Caco-2 (cell line): ENCODE measurements at regions of chr9 and their contacts with region 1.

Region 1: GRCh38 chr9:115591584-115591984 is 473.6 kb upstream of the TNC start:
- DNase-seq: peak; percentile 71 to 72
- H3K4me3 ChIP-seq: no peak overlapping the region
- H3K4me3 Mint-ChIP-seq: peak overlapping the region; percentile 31
- H3K27ac Mint-ChIP-seq: peak overlapping the region; percentile 60
- H3K4me1 ChIP-seq: 0 out of 2 replicates have a peak, but pooled peaks cover 3% of the 10 kb centered on the region
- H3K4me1 Mint-ChIP-seq: peaks cover 8% of the 10 kb centered on the region
- H3K27me3 ChIP-seq: no peaks in the 10 kb centered on the region; the same call in 1 of the 2 replicates
- H3K27me3 Mint-ChIP-seq: peaks cover 2% of the 10 kb centered on the region
- CTCF ChIP-seq: peak; percentile 71 to 86

Region 2: DNA sequence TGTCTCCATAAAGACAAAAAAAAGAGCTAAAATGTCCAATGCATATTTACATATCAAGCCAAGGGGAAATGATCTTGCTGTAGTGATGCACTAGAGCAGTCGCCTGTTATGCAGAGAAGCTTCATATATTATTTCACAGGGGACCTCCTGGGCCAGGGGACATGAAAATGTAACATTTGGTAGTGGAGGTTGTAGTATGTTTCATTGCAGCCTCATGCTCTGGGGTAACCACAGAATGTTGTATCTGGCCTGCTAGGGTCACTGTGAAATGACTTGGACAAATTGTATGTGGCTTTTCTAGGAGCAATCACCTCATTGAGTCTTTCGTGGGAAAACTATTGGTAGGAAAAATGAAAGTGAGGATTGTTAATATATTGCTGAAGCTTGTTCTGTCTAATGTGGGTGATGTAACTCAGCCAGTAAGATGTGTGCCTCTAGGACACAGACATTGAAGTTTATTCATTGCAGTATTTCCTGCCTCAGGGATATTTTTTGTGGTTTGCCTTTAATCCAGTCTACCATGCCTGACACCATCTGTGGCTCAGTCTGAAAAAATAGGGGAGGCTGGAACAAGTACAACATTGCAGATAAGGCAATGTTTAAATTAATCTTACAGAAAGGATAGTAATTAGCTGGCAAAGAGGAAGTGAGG is 42.8 kb before region 1 on chr9:
- CTCF ChIA-PET with region 1: no interaction called
- POLR2A ChIA-PET with region 1: no interaction called
- intact Hi-C with region 1: no loop called
- DNase-seq: no peak
- H3K4me3 ChIP-seq: no peak overlapping the region
- H3K4me3 Mint-ChIP-seq: no peak overlapping the region
- H3K27ac Mint-ChIP-seq: no peak overlapping the region
- H3K4me1 ChIP-seq: no peaks in the 10 kb centered on the region
- H3K4me1 Mint-ChIP-seq: no peaks in the 10 kb centered on the region
- H3K27me3 ChIP-seq: no peaks in the 10 kb centered on the region
- H3K27me3 Mint-ChIP-seq: peaks cover 7% of the 10 kb centered on the region
- CTCF ChIP-seq: no peak

Region 3: DNA sequence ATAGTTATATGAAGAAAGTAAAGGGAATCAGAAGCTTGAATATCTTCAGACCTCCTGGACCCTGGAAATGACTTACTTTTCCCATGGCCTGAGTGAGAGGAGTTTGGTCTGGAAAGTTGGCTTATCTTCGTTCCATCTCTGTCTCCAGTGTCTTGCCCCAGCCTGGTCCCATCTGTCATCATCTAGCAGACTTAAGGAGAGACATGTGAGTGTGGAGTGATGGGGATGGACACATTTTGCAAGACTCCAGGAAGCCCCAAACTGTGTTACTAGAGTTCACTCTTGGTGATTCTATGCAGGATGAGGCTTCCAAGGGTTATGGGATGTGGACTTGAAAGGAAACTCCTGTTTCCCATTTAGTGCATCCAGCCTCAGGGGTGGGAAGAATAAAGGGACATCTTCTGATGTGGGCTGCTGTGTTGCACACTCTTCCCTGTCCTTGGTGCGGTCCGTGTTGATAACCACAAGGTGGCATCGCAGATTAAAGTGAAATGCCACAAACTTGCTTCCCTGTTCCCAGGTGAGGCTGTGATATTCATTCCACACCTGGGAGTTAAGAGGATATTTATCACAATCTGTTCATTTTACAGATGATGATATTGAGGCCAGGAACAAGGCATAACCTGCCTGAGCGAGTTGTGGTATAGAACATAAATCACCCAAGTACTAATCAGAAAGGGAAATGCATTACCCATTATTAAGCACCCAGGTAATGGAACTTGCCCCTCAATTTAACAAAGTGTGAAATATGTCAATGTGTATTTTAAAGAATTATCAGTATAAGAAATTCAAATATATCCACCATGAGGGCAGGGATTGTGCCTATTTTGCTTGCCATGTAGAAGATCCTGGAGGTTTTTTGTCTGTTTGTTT is 292.1 kb after region 1 on chr9:
- CTCF ChIA-PET with region 1: no interaction called
- POLR2A ChIA-PET with region 1: no interaction called
- intact Hi-C with region 1: loop called (anchors 1 kb)
- DNase-seq: peak; percentile 37 to 42
- H3K4me3 ChIP-seq: no peak overlapping the region
- H3K4me3 Mint-ChIP-seq: no peak overlapping the region
- H3K27ac Mint-ChIP-seq: no peak overlapping the region
- H3K4me1 ChIP-seq: no peaks in the 10 kb centered on the region
- H3K4me1 Mint-ChIP-seq: no peaks in the 10 kb centered on the region
- H3K27me3 ChIP-seq: no peaks in the 10 kb centered on the region
- H3K27me3 Mint-ChIP-seq: peaks cover 12% of the 10 kb centered on the region
- CTCF ChIP-seq: peak; percentile 63 to 67

Region 4: DNA sequence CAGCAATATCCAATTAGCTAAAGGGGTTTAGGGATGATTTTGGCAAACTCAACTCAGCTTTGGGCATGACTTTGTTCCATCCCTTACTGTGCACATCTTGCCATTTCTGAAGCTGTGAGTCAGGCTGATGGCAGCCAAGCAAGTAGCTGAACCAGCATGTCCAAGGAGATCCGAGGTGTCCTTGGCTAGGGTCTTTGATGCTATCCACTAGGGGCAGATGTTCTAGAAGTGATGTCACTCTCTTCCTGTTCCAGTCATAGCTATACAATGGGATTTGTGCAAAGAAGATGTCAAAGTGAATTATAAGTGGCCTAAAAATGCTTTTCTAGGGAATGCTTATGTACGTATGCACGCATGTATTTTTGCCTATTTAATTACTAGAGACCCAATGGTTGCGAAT is 401.2 kb after region 1 on chr9:
- CTCF ChIA-PET with region 1: no interaction called
- POLR2A ChIA-PET with region 1: no interaction called
- intact Hi-C with region 1: no loop called
- DNase-seq: no peak
- H3K4me3 ChIP-seq: no peak overlapping the region
- H3K4me3 Mint-ChIP-seq: no peak overlapping the region
- H3K27ac Mint-ChIP-seq: no peak overlapping the region
- H3K4me1 ChIP-seq: no peaks in the 10 kb centered on the region
- H3K4me1 Mint-ChIP-seq: no peaks in the 10 kb centered on the region
- H3K27me3 ChIP-seq: no peaks in the 10 kb centered on the region
- H3K27me3 Mint-ChIP-seq: peaks cover 3% of the 10 kb centered on the region
- CTCF ChIP-seq: no peak

Region 5: DNA sequence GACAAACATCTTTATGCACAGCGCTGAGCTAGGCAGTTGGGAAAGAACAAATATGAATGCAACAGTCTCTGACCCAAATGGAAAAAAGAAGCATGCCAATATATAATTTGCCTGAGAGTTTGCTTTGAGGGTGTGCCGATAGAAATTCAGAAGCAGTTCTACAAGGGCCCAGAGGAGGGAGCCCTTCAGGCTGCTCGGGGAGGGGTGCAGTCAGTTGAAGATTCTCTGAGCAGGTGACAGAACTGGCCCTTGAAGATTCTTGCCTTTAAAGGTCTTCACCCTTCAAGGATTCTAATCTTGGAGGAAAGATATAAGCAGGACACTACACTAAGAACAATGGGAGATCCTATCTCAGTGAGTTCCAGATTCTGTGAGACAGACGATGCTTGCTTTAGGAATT is 558.3 kb after region 1 on chr9:
- CTCF ChIA-PET with region 1: no interaction called
- POLR2A ChIA-PET with region 1: no interaction called
- intact Hi-C with region 1: loop called (anchors 5 kb)
- DNase-seq: peak; percentile 40 to 52
- H3K4me3 ChIP-seq: no peak overlapping the region
- H3K4me3 Mint-ChIP-seq: no peak overlapping the region
- H3K27ac Mint-ChIP-seq: no peak overlapping the region
- H3K4me1 ChIP-seq: no peaks in the 10 kb centered on the region
- H3K4me1 Mint-ChIP-seq: peaks cover 12% of the 10 kb centered on the region
- H3K27me3 ChIP-seq: peaks cover 2% of the 10 kb centered on the region
- H3K27me3 Mint-ChIP-seq: peaks cover 20% of the 10 kb centered on the region
- CTCF ChIP-seq: peak; percentile 70 to 75

Region 6: GRCh38 chr9:116661037-116661954 is 1069.7 kb after region 1 on chr9:
- CTCF ChIA-PET with region 1: no interaction called
- POLR2A ChIA-PET with region 1: no interaction called
- intact Hi-C with region 1: loop called (anchors 1 kb)
- DNase-seq: peak in 1 of 2 experiments; percentile 48
- H3K4me3 ChIP-seq: no peak overlapping the region
- H3K4me3 Mint-ChIP-seq: no peak overlapping the region
- H3K27ac Mint-ChIP-seq: no peak overlapping the region
- H3K4me1 ChIP-seq: no peaks in the 10 kb centered on the region
- H3K4me1 Mint-ChIP-seq: no peaks in the 10 kb centered on the region
- H3K27me3 ChIP-seq: no peaks in the 10 kb centered on the region
- H3K27me3 Mint-ChIP-seq: no peaks in the 10 kb centered on the region
- CTCF ChIP-seq: peak; percentile 73 to 75

Region 7: DNA sequence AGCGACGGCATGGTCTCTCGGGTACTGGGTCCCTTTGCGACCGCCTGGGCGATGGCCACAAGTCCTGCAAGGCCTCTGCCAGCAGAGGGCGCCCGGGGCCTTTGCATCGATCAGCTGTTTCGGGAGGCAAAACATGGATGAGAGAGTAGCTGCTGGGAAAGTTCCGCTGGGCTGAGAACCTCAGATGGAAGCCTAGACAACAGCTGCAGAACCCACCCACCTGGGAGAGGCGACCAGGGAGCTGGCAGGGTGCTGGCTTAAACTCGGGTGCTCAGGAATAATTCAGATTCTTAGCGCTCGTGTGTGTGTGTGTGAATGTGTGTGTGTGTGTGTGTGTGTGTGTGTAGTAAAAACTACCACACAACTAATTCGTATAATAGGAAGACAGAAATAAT is 1145.6 kb after region 1 on chr9:
- CTCF ChIA-PET with region 1: no interaction called
- POLR2A ChIA-PET with region 1: no interaction called
- intact Hi-C with region 1: loop called (anchors 2 kb)
- DNase-seq: peak; percentile 85 to 90
- H3K4me3 ChIP-seq: no peak overlapping the region
- H3K4me3 Mint-ChIP-seq: no peak overlapping the region
- H3K27ac Mint-ChIP-seq: no peak overlapping the region
- H3K4me1 ChIP-seq: no peaks in the 10 kb centered on the region
- H3K4me1 Mint-ChIP-seq: peaks cover 7% of the 10 kb centered on the region
- H3K27me3 ChIP-seq: no peaks in the 10 kb centered on the region
- H3K27me3 Mint-ChIP-seq: peaks cover 4% of the 10 kb centered on the region
- CTCF ChIP-seq: peak; percentile 89 to 97

Region 8: DNA sequence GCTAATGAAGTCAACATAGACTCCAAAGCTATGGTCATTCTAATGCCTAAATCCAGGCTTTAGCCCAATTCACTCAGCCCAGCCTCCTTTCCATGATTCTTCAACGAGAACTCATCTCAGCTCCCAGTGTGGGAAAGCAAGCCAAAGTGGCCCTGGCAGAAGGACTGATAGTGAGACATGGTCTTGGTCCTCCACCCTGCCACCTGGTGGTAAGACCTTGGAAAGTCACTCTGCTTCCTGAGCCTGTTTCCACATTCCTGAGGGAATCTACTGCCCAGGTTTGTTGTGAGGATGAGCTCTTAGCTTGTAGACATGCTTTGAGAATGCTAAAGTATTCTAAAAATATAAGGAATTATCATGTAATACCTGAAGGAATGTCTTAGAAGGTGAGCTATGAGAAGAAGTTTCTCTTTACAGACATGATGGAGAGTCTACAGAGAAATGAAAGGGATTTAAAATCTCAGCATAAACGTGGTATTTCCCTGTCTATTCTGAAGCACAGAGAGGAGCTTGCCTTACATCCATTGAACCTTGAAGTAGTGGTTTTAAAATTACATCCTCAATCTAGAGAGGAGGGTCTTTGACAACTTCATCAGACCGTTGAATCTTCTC is 1269.0 kb after region 1 on chr9:
- CTCF ChIA-PET with region 1: no interaction called
- POLR2A ChIA-PET with region 1: no interaction called
- intact Hi-C with region 1: loop called (anchors 10 kb)
- DNase-seq: peak; percentile 69 to 80
- H3K4me3 ChIP-seq: no peak overlapping the region
- H3K4me3 Mint-ChIP-seq: no peak overlapping the region
- H3K27ac Mint-ChIP-seq: no peak overlapping the region
- H3K4me1 ChIP-seq: no peaks in the 10 kb centered on the region
- H3K4me1 Mint-ChIP-seq: no peaks in the 10 kb centered on the region
- H3K27me3 ChIP-seq: no peaks in the 10 kb centered on the region
- H3K27me3 Mint-ChIP-seq: peaks cover 8% of the 10 kb centered on the region
- CTCF ChIP-seq: peak; percentile 76